ENCODE measurements at regions of chr6 and their contacts with region 1.

Region 1: GRCh38 chr6:13454286-13455221 is 32.8 kb downstream of the GFOD1 start:
- DNase-seq: peak; percentile 52
- H3K4me3 Mint-ChIP-seq: peak overlapping the region; percentile 30
- H3K27ac Mint-ChIP-seq: peak overlapping the region; percentile 71
- H3K4me1 Mint-ChIP-seq: peaks cover 47% of the 10 kb centered on the region
- H3K27me3 Mint-ChIP-seq: no peaks in the 10 kb centered on the region

Region 2: DNA sequence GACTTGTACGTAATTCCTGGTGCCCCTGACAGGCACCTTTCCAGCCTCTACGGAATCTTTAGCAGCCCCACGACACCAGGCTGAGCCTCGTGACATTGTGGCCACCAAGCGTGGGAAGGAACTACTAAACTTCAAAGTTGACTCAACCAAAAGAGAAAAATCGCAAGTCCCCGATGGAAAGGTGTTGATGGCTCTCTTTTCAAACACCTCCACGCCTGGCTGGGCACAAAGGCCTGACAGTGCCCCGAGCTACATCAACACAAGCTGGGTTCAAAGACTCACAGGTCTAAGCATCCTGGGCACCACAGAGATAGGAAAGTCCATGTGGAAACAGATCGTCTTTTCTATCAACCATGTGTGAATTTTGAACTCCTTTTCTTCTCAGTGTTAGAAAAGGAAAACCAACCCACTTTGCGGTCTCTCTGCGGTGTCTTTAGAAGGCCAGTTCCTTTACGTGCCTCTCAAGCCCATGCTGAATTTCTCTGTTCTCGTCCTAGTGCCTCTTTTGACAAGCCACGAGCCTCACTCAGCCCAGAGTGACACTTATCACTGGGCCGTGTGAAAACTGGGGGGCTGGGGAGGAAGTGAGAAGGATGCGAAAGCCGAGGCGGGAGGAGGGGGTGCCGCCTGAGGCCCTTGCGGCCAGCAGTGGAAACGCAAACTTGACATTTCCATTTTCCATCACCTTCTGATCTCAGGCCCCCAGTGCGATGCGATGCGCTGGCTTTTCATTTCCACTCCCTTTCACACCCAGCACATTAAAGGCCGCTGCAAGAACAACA is 26.6 kb before region 1 on chr6:
- intact Hi-C with region 1: loop called (anchors 1 kb)
- DNase-seq: peak; percentile 64
- H3K4me3 Mint-ChIP-seq: peak overlapping the region; percentile 27
- H3K27ac Mint-ChIP-seq: peak overlapping the region; percentile 84
- H3K4me1 Mint-ChIP-seq: peaks cover 71% of the 10 kb centered on the region
- H3K27me3 Mint-ChIP-seq: no peaks in the 10 kb centered on the region

Region 3: DNA sequence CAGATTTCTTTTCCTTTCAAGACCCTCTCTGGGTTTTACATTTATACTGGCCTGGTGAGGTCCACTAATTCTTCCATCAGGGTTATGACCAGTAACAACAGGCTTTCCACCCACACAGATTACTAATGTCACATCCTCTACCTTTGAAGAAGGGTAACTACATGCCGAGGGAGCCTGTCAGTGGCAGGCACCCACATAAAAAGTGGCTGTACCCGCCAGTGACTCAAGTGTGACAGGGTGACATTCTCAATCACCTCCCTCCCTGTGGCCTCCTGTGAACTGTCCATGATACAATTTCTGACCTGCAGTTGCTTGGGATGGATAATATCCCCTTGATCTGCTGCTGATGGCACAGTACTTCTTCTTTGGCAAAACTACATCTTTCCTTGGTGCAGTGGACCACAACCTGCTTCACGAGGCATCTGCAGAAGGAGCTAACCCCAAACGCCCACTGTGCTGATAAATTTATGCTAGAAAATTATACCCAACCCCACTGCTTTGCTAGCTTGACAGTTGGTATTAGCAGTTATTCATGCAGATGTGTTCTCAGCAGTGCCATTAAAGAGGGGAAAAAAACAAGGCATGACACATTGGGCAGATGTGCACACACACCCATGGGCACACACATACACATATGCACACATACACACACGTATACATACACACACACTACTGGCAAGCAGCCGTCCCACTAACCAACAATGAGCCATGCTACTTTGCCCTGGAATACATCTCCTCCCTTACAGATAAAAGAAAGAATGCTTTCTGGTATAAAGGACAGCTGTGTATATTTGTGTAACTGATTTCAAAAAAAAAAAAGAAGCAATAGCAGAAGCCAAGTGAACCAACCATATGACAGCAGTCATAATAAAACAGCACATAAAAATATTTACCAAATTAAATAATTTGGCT is 12.0 kb after region 1 on chr6:
- intact Hi-C with region 1: loop called (anchors 1 kb)
- DNase-seq: no peak
- H3K4me3 Mint-ChIP-seq: peak overlapping the region; percentile 11
- H3K27ac Mint-ChIP-seq: peak overlapping the region; percentile 85
- H3K4me1 Mint-ChIP-seq: peaks cover 62% of the 10 kb centered on the region
- H3K27me3 Mint-ChIP-seq: no peaks in the 10 kb centered on the region

Region 4: GRCh38 chr6:13711733-13712598 is 257.4 kb after region 1 on chr6 and contains the start of gene RANBP9:
- intact Hi-C with region 1: no loop called
- DNase-seq: peak; percentile 85
- H3K4me3 Mint-ChIP-seq: peak within 1 kb of the TSS; percentile 93
- H3K27ac Mint-ChIP-seq: peak within 1 kb of the TSS; percentile 93
- H3K4me1 Mint-ChIP-seq: peaks cover 57% of the 10 kb centered on the region
- H3K27me3 Mint-ChIP-seq: no peaks in the 10 kb centered on the region
- total RNA-seq, gene RANBP9: 50.7 and 55.7 TPM in 2 replicates

Measured in activated T-helper 2 cell treated with anti-CD3 and anti-CD28 coated beads, Interferon-gamma antibody, Interleukin-2, Interleukin-4, amounts not matched to agents 10 μg/mL and 5 μg/mL and 100 μg/mL, durations not matched to agents 14 hours and 24 hours and 36 hours (primary cell).